ENCODE measurements at regions of chr2 and their contacts with region 1.

Region 1: DNA sequence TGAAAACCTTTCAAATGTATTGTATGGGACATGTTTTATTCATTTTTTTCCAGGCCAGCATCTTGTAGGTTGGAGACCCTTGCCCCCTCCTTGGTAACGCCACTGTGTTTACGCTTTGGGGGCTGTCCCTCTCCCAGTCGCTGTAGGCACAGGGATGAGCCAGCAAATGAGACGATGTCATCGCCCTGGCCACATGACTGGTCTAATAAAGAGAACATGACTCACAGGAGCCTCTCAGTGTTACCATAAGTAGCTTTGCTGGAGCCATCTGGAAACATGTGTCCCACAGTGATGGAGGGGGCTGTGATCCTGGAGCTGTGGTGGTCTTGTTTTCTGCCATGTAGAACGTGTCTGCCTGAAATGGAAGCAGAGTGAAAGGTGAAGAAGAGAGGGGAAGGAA is 78.9 kb downstream of the CD8B2 start:
- DNase-seq: peak; percentile 73
- H3K4me3 Mint-ChIP-seq: no peak overlapping the region
- H3K27ac Mint-ChIP-seq: peak overlapping the region; percentile 59
- H3K4me1 Mint-ChIP-seq: peaks cover 15% of the 10 kb centered on the region
- H3K27me3 Mint-ChIP-seq: peaks cover 16% of the 10 kb centered on the region

Region 2: GRCh38 chr2:106098081-106098480 is 468.0 kb before region 1 on chr2:
- CTCF ChIA-PET with region 1: no interaction called
- POLR2A ChIA-PET with region 1: no interaction called
- intact Hi-C with region 1: loop called (anchors 10 kb)
- DNase-seq: peak; percentile 50
- H3K4me3 Mint-ChIP-seq: no peak overlapping the region
- H3K27ac Mint-ChIP-seq: no peak overlapping the region
- H3K4me1 Mint-ChIP-seq: peaks cover 36% of the 10 kb centered on the region
- H3K27me3 Mint-ChIP-seq: no peaks in the 10 kb centered on the region